Colonic mucosa (tissue), 4 donors: ENCODE measurements at regions of chr3 and their contacts with region 1.

Region 1: GRCh38 chr3:44712455-44713075 is at the start of gene ZNF502:
- DNase-seq: peak; percentile 93
- H3K4me3 ChIP-seq: peak within 1 kb of the TSS; percentile 94
- H3K27ac ChIP-seq: peak within 1 kb of the TSS; percentile 20
- H3K4me1 ChIP-seq: no peaks in the 10 kb centered on the region
- H3K27me3 ChIP-seq: no peaks in the 10 kb centered on the region
- CTCF ChIP-seq: peak; percentile 34
- total RNA-seq, gene ZNF502: 3.3 to 3.5 TPM

Region 2: DNA sequence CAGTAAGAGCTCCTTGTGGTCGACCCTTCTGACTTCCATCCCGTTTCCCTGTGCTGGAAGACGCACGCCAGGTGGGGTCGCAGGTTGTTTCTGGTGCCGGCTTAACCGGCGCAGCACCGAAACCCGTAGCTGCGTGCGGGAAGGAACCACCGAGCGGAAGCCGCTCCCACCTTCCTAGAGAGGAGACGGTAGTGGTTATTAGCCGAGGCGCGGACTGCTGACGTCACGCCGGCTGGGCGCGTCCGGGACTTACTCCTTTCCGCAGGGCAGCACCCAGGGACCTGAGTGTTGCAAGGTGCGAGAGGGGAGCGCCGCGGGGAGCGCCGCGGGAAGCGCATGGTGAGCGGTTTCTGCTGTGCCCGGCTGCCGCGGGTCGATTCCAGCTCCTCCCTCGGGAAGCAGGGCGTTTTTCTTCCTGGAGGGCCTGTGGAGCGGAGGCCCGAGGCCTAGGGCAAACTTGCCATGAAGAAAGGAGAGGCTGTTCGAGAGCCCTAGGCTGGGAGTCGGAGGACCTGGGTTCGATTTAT is 16.9 kb after region 1 on chr3 and contains the start of gene ZNF501:
- intact Hi-C with region 1: loop called (anchors 2 kb)
- DNase-seq: peak; percentile 98
- H3K4me3 ChIP-seq: peak within 1 kb of the TSS; percentile 80
- H3K27ac ChIP-seq: peak within 1 kb of the TSS; percentile 37
- H3K4me1 ChIP-seq: no peaks in the 10 kb centered on the region
- H3K27me3 ChIP-seq: no peaks in the 10 kb centered on the region
- CTCF ChIP-seq: no peak
- total RNA-seq, gene ZNF501: 3.0 TPM